H1 (cell line): ENCODE measurements at regions of chr2 and their contacts with region 1.

Region 1: GRCh38 chr2:25664183-25664964 is 9.0 kb downstream of the DTNB start:
- DNase-seq: peak; percentile 43 to 62
- H3K4me3 ChIP-seq: no peak overlapping the region
- H3K27ac ChIP-seq: no peak overlapping the region
- H3K4me1 ChIP-seq: peaks cover 0 to 8% (median 2%) of the 10 kb centered on the region in 4 experiments; a peak in 3 of 7 replicates
- H3K27me3 ChIP-seq: no peaks in the 10 kb centered on the region
- CTCF ChIP-seq: peak; percentile 50 to 87 (median 79)
- EP300 ChIP-seq: no peak
- POLR2A ChIP-seq: no peak
- RAD21 ChIP-seq: peak; percentile 87 to 91

Region 2: GRCh38 chr2:25651071-25651470 is 13.3 kb before region 1 on chr2:
- CTCF ChIA-PET with region 1: interaction called, 19 read pairs
- POLR2A ChIA-PET with region 1: interaction called, 4 read pairs
- DNase-seq: no peak
- H3K4me3 ChIP-seq: no peak overlapping the region
- H3K27ac ChIP-seq: no peak overlapping the region
- H3K4me1 ChIP-seq: no peaks in the 10 kb centered on the region
- H3K27me3 ChIP-seq: no peaks in the 10 kb centered on the region
- CTCF ChIP-seq: no peak
- EP300 ChIP-seq: no peak
- POLR2A ChIP-seq: no peak
- RAD21 ChIP-seq: no peak

Region 3: DNA sequence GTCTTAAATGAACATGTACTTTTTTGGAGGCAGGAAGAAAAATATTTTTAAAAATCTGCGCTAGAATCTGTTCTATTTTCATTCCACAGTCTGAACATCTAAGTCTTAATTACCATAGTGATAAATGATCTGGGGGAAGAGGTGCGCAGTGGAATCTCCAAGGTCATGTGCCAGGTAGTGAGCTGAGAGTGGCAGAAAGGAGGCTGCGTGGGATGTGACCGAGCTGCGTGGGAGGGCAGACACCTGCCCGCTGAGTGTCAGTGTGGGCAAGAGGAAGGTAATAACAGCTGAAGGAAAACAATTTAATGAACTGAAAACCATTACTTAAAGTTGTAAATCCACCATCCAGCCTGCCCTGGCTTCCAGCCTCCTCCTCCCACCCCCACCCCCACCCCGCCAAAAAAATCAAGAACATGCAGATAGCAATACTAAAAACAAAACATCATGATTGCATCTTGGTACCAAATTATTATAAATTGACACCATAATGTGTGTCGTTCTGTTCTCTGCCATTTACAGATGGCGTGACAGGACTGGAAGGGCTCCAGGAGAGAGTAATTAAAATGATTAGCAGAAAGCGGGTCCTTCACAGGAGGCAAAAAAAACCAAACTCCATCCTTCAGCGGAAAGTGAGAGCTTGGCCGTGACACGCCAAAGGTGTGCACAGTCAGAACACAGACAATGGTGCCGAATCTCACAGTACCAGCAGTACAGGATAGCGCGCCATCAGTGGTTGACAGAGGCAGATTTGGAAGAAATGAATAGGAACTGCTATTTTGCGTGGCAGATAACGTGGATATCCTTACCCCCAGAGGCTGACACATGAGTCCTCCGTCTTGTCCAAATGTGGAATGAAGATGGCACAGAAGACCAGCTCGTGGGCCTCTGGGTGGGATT is 20.5 kb after region 1 on chr2:
- CTCF ChIA-PET with region 1: interaction called, 12 read pairs
- POLR2A ChIA-PET with region 1: no interaction called
- DNase-seq: no peak
- H3K4me3 ChIP-seq: no peak overlapping the region
- H3K27ac ChIP-seq: no peak overlapping the region
- H3K4me1 ChIP-seq: no peaks in the 10 kb centered on the region
- H3K27me3 ChIP-seq: no peaks in the 10 kb centered on the region
- CTCF ChIP-seq: no peak
- EP300 ChIP-seq: no peak
- POLR2A ChIP-seq: no peak
- RAD21 ChIP-seq: no peak

Region 4: DNA sequence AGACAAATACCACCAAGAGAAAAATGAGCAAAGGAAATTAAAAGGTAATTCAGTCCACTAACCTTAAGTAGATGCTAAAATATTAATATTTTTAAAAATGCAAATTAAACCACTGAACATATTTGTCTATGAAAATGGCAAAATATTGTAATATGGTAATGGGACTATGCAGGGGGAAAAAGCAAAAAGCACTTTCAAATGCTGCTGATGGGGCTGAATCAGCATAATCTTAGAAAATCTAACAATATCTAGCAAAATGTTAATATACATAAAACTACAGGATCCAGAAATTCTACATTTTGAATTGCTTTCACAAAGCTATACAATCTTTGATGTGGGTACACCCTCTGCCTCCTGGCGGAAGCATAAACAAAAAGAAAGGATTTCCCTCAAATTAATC is 95.9 kb after region 1 on chr2:
- CTCF ChIA-PET with region 1: no interaction called
- POLR2A ChIA-PET with region 1: no interaction called
- DNase-seq: no peak
- H3K4me3 ChIP-seq: no peak overlapping the region
- H3K27ac ChIP-seq: no peak overlapping the region
- H3K4me1 ChIP-seq: no peaks in the 10 kb centered on the region
- H3K27me3 ChIP-seq: no peaks in the 10 kb centered on the region
- CTCF ChIP-seq: no peak
- EP300 ChIP-seq: no peak
- POLR2A ChIP-seq: no peak
- RAD21 ChIP-seq: no peak